Mammary epithelial cell (primary cell): ENCODE measurements at regions of chr14 and their contacts with region 1.

Region 1: GRCh38 chr14:35180179-35180578 is 57.8 kb downstream of the PRORP start:
- DNase-seq: no peak
- H3K4me3 ChIP-seq: no peak overlapping the region
- H3K27ac ChIP-seq: no peak overlapping the region
- H3K4me1 ChIP-seq: no peaks in the 10 kb centered on the region
- H3K27me3 ChIP-seq: no peaks in the 10 kb centered on the region
- CTCF ChIP-seq: no peak

Region 2: GRCh38 chr14:35247777-35248475 is 67.7 kb after region 1 on chr14:
- CTCF ChIA-PET with region 1: no interaction called
- dilution Hi-C with region 1: no loop called
- in situ Hi-C with region 1: no loop called
- intact Hi-C with region 1: no loop called
- DNase-seq: no peak
- H3K4me3 ChIP-seq: no peak overlapping the region
- H3K27ac ChIP-seq: no peak overlapping the region
- H3K4me1 ChIP-seq: no peaks in the 10 kb centered on the region
- H3K27me3 ChIP-seq: no peaks in the 10 kb centered on the region
- CTCF ChIP-seq: no peak

Region 3: DNA sequence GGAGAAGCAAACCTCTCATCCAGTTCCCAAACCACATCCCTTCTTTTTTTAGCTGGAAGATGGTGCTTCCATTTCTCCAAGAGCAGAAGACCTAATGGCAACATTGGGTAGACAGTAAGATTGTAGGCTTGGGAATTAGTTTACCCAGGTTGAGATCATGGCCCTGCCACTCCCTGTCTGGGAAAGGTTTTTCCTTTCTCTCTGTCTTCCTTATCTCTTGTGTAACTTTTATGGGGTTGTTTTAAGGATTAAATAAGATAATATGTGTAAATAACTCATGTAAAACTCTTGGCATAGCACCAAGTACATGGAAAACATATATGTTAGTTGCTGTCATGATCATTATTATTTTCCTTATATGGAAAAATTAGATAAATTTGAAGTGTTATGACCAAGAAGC is 88.8 kb after region 1 on chr14:
- CTCF ChIA-PET with region 1: no interaction called
- dilution Hi-C with region 1: loop called (anchors 5 kb)
- in situ Hi-C with region 1: no loop called
- intact Hi-C with region 1: no loop called
- DNase-seq: no peak
- H3K4me3 ChIP-seq: no peak overlapping the region
- H3K27ac ChIP-seq: no peak overlapping the region
- H3K4me1 ChIP-seq: no peaks in the 10 kb centered on the region
- H3K27me3 ChIP-seq: no peaks in the 10 kb centered on the region
- CTCF ChIP-seq: no peak